ENCODE measurements at regions of chr15 and their contacts with region 1.

Region 1: DNA sequence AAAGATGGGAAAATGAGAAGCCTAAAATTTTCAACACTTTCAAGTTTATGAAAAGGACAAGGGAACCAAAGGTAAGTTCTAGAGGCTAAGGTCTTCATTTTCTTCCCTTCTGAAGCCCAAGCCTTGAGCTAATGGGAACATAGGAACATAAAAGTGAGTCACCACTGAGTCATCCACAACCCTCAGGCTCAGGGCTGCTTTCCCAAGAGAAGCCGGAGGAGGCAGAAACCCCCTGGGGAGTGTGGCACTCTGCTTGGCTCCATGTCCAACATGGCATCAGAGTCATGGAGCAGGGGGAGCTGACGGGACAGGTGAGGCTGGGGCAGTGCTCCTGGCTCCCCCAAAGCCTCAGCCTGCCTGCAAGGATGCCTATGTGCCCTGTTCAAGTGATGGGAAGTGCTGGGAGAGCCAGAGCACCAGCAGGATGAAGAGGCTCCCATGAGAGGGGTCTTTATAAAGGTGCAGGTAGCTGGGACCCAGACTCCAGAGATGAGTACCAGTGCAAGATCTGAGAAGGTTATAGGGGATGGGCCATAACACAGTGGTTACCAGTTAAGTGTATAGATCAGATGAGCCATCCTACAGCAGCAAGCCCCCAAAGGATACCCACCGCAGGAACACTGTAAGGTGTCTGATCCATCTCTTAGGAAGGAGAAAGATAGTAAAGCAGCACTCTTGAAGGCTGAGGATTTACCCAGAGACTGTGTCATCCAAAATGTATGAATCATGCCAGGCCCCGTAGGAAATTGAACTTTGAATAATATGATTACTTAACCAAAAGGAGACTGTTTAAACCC is 31.8 kb upstream of the RYR3 start:
- DNase-seq: peak; percentile 52
- H3K4me3 ChIP-seq: no peak overlapping the region
- CTCF ChIP-seq: peak; percentile 27

Region 2: DNA sequence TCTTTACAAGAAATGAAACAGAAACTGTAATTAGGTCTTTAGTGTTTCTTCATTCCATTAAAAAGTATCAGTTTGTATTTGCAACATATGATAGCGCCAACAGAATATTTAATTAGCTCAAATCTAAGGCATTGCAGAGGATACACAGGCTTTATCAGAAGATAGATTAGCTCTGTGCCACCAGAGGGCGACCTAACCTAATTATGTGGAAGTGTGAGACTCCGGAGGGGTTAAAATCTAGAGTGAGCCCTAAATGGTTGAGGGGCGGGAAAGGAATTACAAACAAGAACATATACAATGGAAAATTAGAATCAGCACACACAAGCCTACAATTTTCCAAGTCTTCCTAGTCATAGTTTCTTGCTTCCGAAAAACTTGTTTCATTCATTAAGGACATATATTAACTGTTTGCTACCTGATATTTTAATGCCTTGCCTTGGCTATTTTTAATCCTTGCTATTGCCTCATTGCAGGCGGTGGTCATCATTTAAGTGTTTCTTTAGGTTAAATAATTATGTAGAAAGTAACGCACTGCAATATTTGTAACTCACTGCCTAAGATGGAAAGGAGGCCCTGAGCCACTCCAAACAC is 13.8 kb after region 1 on chr15:
- CTCF ChIA-PET with region 1: interaction called, 41 read pairs
- POLR2A ChIA-PET with region 1: no interaction called
- DNase-seq: no peak
- H3K4me3 ChIP-seq: no peak overlapping the region
- CTCF ChIP-seq: peak; percentile 62

Region 3: GRCh38 chr15:33639978-33640377 is 361.0 kb after region 1 on chr15:
- CTCF ChIA-PET with region 1: no interaction called
- POLR2A ChIA-PET with region 1: no interaction called
- DNase-seq: no peak
- H3K4me3 ChIP-seq: no peak overlapping the region
- CTCF ChIP-seq: no peak

Measured in AG04449 (cell line).